ENCODE measurements at regions of chr2 and their contacts with region 1.

Region 1: GRCh38 chr2:174593574-174594203 is 3.9 kb downstream of the WIPF1 start:
- DNase-seq: peak; percentile 53 to 90 (median 82)
- H3K4me3 ChIP-seq: peak overlapping the region; percentile 61
- H3K4me3 Mint-ChIP-seq: peak overlapping the region; percentile 86 to 99 (median 98)
- H3K27ac ChIP-seq: peak overlapping the region; percentile 68
- H3K27ac Mint-ChIP-seq: peak overlapping the region; percentile 91 to 99 (median 98)
- H3K4me1 ChIP-seq: peaks cover 52% of the 10 kb centered on the region
- H3K4me1 Mint-ChIP-seq: peaks cover 56 to 69% (median 57%) of the 10 kb centered on the region in 3 donors
- H3K27me3 ChIP-seq: no peaks in the 10 kb centered on the region
- H3K27me3 Mint-ChIP-seq: no peaks in the 10 kb centered on the region

Region 2: GRCh38 chr2:174634130-174635014 is 40.7 kb after region 1 on chr2:
- CTCF ChIA-PET with region 1: interaction called, 9 read pairs
- POLR2A ChIA-PET with region 1: interaction called, 16 read pairs
- DNase-seq: peak; percentile 20 to 69 (median 53)
- H3K4me3 ChIP-seq: peak overlapping the region; percentile 78
- H3K4me3 Mint-ChIP-seq: peak overlapping the region; percentile 90 to 97 (median 92)
- H3K27ac ChIP-seq: peak overlapping the region; percentile 66
- H3K27ac Mint-ChIP-seq: peak overlapping the region; percentile 85 to 99 (median 94)
- H3K4me1 ChIP-seq: peaks cover 54% of the 10 kb centered on the region
- H3K4me1 Mint-ChIP-seq: peaks cover 63 to 86% (median 76%) of the 10 kb centered on the region in 3 donors
- H3K27me3 ChIP-seq: no peaks in the 10 kb centered on the region
- H3K27me3 Mint-ChIP-seq: no peaks in the 10 kb centered on the region

Region 3: DNA sequence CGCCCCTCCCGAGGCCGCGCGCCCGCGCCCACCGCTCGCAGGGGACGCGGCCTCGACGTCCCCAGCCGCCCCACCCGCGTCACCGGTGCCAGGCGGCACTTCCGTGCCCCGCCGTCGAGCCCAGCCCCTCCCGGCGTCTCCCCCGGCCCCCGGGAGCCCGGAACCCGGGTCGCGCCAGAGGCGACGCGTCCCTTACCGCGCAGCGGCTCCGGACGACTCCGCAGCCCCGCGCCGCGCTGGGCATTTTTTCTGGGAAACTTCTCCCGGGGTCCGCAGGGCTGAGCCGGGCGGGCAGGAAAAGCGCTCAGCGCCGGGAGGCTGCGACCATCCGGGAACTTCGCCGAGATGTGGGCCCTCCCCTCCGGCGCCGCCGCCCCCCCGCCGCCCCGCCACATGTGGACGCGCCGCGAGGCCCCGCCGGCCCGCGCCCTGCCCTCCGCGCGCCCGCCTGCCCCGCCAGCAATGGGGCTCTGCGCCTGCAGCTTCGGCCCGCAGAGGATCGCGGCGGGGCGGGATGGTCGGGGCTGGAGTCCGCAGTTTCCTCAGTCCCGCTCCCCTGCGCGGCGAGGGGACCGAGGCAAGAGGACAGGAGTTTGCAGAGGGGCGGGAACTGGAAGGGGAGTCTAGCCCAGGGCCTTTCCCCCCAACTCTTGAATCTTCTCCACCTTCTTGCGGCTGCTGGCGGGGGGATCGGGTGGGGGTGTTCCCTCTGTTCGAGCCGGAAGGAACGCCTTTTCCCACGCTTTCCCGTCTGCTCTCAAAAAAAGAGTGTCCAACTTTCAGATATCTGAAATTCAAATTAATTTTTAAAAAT is 89.1 kb after region 1 on chr2:
- CTCF ChIA-PET with region 1: interaction called, 27 read pairs
- POLR2A ChIA-PET with region 1: interaction called, 11 read pairs
- DNase-seq: peak; percentile 54 to 80 (median 74)
- H3K4me3 ChIP-seq: peak overlapping the region; percentile 67
- H3K4me3 Mint-ChIP-seq: peak overlapping the region; percentile 89 to 99 (median 91)
- H3K27ac ChIP-seq: peak overlapping the region; percentile 71
- H3K27ac Mint-ChIP-seq: peak overlapping the region; percentile 82 to 98 (median 94)
- H3K4me1 ChIP-seq: peaks cover 31% of the 10 kb centered on the region
- H3K4me1 Mint-ChIP-seq: peaks cover 51 to 74% (median 54%) of the 10 kb centered on the region in 3 donors
- H3K27me3 ChIP-seq: no peaks in the 10 kb centered on the region
- H3K27me3 Mint-ChIP-seq: no peaks in the 10 kb centered on the region

Region 4: DNA sequence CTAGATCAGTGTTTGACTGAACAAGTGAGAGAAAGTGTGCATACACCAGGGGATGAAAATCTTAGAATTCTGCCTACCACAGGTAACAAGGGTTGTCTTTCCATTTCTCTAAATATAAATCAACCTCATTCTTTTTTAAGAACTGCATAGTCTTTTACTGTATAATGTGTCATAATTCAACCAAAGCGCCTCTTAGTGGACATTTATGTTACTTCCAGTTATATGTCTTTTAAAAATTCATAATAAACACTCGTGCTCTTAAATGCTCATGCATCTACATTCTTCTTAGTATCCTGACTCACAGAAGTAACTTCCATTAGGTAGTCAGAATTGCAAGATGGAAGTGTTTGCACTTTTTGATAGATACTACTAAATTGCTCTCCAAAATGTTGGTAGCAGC is 94.4 kb after region 1 on chr2:
- CTCF ChIA-PET with region 1: interaction called, 27 read pairs
- POLR2A ChIA-PET with region 1: interaction called, 5 read pairs
- DNase-seq: peak in 2 of 5 donors; percentile 36 to 47
- H3K4me3 ChIP-seq: no peak overlapping the region
- H3K4me3 Mint-ChIP-seq: peak overlapping the region in 1 of 7 donors; percentile 57
- H3K27ac ChIP-seq: no peak overlapping the region
- H3K27ac Mint-ChIP-seq: peak overlapping the region; percentile 19 to 67 (median 39)
- H3K4me1 ChIP-seq: no peaks in the 10 kb centered on the region
- H3K4me1 Mint-ChIP-seq: peaks cover 18 to 37% (median 24%) of the 10 kb centered on the region in 3 donors
- H3K27me3 ChIP-seq: no peaks in the 10 kb centered on the region
- H3K27me3 Mint-ChIP-seq: peaks cover 2 to 8% of the 10 kb centered on the region in 2 donors

Measured in CD8-positive, alpha-beta memory T cell (primary cell).